Activated naive CD4-positive, alpha-beta T cell treated with anti-CD3 and anti-CD28 coated beads for 36 hours (primary cell): ENCODE measurements at regions of chr1 and their contacts with region 1.

Region 1: DNA sequence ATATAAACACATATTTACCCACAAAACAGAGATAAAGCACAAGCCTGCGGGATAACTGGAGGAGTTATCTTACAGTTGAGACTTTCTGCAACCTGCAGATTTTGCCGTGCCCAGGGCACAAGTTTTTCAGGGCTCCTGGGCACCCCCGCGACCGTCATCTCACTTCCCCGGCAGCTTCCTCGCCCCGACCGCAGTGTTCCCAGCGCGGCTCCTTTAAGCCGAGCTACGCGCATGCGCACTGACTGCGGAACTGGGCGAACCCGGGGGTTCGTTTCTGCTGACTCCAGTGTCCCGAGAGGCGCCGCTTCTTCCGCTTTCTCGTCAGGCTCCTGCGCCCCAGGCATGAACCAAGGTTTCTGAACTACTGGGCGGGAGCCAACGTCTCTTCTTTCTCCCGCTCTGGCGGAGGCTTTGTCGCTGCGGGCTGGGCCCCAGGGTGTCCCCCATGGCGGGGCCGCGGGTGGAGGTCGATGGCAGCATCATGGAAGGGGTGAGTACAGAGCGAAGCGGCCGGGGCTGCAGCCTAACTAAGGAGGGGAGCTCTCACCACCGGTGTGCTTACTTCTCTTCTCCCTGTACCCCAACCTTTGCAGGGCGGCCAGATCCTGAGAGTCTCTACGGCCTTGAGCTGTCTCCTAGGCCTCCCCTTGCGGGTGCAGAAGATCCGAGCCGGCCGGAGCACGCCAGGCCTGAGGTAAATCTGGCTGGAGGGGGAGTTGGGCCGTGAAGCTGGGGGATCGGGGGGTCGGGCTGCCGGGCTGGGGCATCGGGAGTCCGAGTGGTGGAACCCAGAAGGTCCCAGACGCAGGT is at the start of gene RTCA:
- DNase-seq: peak; percentile 96
- H3K4me3 Mint-ChIP-seq: peak within 1 kb of the TSS; percentile 100
- H3K27ac Mint-ChIP-seq: peak within 1 kb of the TSS; percentile 96
- H3K4me1 Mint-ChIP-seq: peaks cover 35% of the 10 kb centered on the region
- H3K27me3 Mint-ChIP-seq: no peaks in the 10 kb centered on the region
- total RNA-seq, gene RTCA: 36.7 to 37.5 TPM

Region 2: GRCh38 chr1:99969729-99970621 is 296.2 kb before region 1 on chr1 and contains the start of gene SLC35A3:
- CTCF ChIA-PET with region 1: interaction called, 4 read pairs
- intact Hi-C with region 1: loop called (anchors 1 kb)
- DNase-seq: peak; percentile 85
- H3K4me3 Mint-ChIP-seq: peak within 1 kb of the TSS; percentile 96
- H3K27ac Mint-ChIP-seq: peak within 1 kb of the TSS; percentile 85
- H3K4me1 Mint-ChIP-seq: peaks cover 22% of the 10 kb centered on the region
- H3K27me3 Mint-ChIP-seq: no peaks in the 10 kb centered on the region
- total RNA-seq, gene SLC35A3: 13.8 to 15.5 TPM

Region 3: GRCh38 chr1:100249537-100250257 is 16.4 kb before region 1 on chr1 and contains the start of gene DBT:
- CTCF ChIA-PET with region 1: interaction called, 3 read pairs
- intact Hi-C with region 1: loop called (anchors 1 kb)
- DNase-seq: peak; percentile 97
- H3K4me3 Mint-ChIP-seq: no peak within 1 kb of the TSS
- H3K27ac Mint-ChIP-seq: no peak within 1 kb of the TSS
- H3K4me1 Mint-ChIP-seq: peaks cover 18% of the 10 kb centered on the region
- H3K27me3 Mint-ChIP-seq: no peaks in the 10 kb centered on the region
- total RNA-seq, gene DBT: 12.3 to 12.5 TPM

Region 4: GRCh38 chr1:100377590-100378361 is 111.6 kb after region 1 on chr1:
- CTCF ChIA-PET with region 1: no interaction called
- intact Hi-C with region 1: no loop called
- DNase-seq: no peak
- H3K4me3 Mint-ChIP-seq: no peak overlapping the region
- H3K27ac Mint-ChIP-seq: peak overlapping the region; percentile 71
- H3K4me1 Mint-ChIP-seq: peaks cover 60% of the 10 kb centered on the region
- H3K27me3 Mint-ChIP-seq: no peaks in the 10 kb centered on the region

Region 5: DNA sequence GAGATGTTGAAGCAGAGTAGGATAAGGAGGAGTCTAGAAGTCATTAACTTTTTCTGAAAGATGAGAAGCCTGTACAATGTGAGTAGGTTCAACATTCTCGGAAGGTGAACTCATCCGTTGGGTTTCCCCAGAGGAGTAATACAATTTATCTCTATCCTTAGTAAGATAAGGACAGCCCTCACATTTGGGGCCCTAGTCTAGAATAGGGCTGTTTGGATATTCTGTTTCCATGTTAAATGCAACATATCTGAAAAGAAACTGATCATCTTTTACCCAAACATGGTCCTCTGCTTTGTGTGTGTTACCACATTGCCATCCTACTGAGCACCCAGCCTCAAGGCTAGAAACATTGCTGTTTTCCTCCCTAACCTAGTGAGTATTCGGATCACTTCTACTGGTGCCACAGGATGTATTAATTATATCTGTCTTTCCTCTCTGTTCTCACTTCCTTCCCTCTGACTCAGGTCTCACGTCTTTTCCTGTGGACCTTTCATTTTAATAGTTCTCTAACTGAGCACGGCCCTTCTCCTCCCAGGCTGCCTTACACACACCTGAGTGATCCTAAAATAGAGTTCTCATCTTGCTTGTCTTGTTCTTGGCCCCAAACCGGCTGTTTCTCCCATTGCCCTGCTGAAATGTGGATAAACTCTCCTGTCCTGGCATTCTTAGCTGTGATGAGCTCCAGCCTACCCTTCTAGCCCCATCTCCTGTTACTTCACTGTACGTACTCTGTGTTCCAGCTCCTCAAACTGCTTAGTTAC is 177.9 kb after region 1 on chr1:
- CTCF ChIA-PET with region 1: no interaction called
- intact Hi-C with region 1: loop called (anchors 5 kb)
- DNase-seq: peak; percentile 53
- H3K4me3 Mint-ChIP-seq: peak overlapping the region; percentile 72
- H3K27ac Mint-ChIP-seq: peak overlapping the region; percentile 96
- H3K4me1 Mint-ChIP-seq: peaks cover 85% of the 10 kb centered on the region
- H3K27me3 Mint-ChIP-seq: no peaks in the 10 kb centered on the region

Region 6: GRCh38 chr1:100895540-100896483 is 629.7 kb after region 1 on chr1 and contains the start of gene SLC30A7:
- CTCF ChIA-PET with region 1: no interaction called
- intact Hi-C with region 1: loop called (anchors 10 kb)
- DNase-seq: peak; percentile 98
- H3K4me3 Mint-ChIP-seq: peak within 1 kb of the TSS; percentile 100
- H3K27ac Mint-ChIP-seq: peak within 1 kb of the TSS; percentile 100
- H3K4me1 Mint-ChIP-seq: peaks cover 37% of the 10 kb centered on the region
- H3K27me3 Mint-ChIP-seq: no peaks in the 10 kb centered on the region
- total RNA-seq, gene SLC30A7: 32.4 to 32.6 TPM